Activated naive CD8-positive, alpha-beta T cell treated with anti-CD3 and anti-CD28 coated beads, Interleukin-2, amount 10 ng/mL, durations not matched to agents 7 days and 5 days (primary cell): ENCODE measurements at regions of chr17 and their contacts with region 1.

Region 1: DNA sequence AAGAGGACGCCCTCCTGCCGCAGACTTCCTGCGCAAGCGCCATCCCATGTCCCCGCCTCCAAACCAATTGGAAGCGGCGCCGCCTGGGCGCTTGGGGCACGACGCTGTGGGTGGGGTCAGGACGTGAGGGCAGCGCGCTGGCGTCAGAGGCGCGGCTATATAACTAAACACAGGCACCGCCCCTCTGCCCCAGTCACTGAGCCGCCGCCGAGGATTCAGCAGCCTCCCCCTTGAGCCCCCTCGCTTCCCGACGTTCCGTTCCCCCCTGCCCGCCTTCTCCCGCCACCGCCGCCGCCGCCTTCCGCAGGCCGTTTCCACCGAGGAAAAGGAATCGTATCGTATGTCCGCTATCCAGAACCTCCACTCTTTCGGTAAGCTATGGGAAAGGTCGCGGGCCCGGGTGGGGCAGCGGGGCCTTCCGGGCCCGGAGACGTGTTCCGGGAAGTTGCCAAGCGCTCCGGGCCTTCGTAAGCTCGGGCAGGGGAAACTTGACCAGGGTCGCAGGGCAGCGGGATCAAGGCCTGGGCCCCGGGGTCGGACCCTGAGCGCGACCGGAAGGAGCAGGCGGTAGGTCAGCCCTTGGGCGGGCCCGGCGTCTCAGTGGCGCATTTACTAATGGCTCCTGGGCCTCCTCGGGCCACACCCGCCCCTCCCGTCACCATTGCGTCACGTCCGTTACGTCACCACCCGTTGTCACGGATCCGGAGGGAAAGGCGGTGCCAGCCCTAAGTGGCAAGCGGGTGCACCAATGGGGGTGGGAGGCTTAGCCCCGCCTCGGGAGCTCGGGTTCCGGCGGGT is at the start of gene EIF1:
- DNase-seq: peak; percentile 100
- ATAC-seq: peak; percentile 67
- H3K4me3 Mint-ChIP-seq: peak within 1 kb of the TSS; percentile 90
- H3K27ac Mint-ChIP-seq: peak within 1 kb of the TSS; percentile 95
- H3K4me1 Mint-ChIP-seq: peaks cover 28% of the 10 kb centered on the region
- H3K27me3 Mint-ChIP-seq: no peaks in the 10 kb centered on the region
- total RNA-seq, gene EIF1: 682 to 723 TPM

Region 2: GRCh38 chr17:41648411-41649195 is 40.3 kb before region 1 on chr17:
- POLR2A ChIA-PET with region 1: interaction called, 21 read pairs
- DNase-seq: peak; percentile 93
- ATAC-seq: peak; percentile 81
- H3K4me3 Mint-ChIP-seq: peak overlapping the region; percentile 79
- H3K27ac Mint-ChIP-seq: peak overlapping the region; percentile 72
- H3K4me1 Mint-ChIP-seq: peaks cover 8% of the 10 kb centered on the region
- H3K27me3 Mint-ChIP-seq: peaks cover 2% of the 10 kb centered on the region

Region 3: GRCh38 chr17:41665566-41666236 is 23.2 kb before region 1 on chr17:
- POLR2A ChIA-PET with region 1: interaction called, 171 read pairs
- DNase-seq: peak; percentile 99
- ATAC-seq: peak; percentile 90
- H3K4me3 Mint-ChIP-seq: peak overlapping the region; percentile 88
- H3K27ac Mint-ChIP-seq: peak overlapping the region; percentile 96
- H3K4me1 Mint-ChIP-seq: peaks cover 28% of the 10 kb centered on the region
- H3K27me3 Mint-ChIP-seq: peaks cover 13% of the 10 kb centered on the region

Region 4: GRCh38 chr17:41672153-41672552 is 16.7 kb before region 1 on chr17:
- POLR2A ChIA-PET with region 1: interaction called, 331 read pairs
- DNase-seq: no peak
- ATAC-seq: no peak
- H3K4me3 Mint-ChIP-seq: no peak overlapping the region
- H3K27ac Mint-ChIP-seq: no peak overlapping the region
- H3K4me1 Mint-ChIP-seq: peaks cover 32% of the 10 kb centered on the region
- H3K27me3 Mint-ChIP-seq: no peaks in the 10 kb centered on the region

Region 5: DNA sequence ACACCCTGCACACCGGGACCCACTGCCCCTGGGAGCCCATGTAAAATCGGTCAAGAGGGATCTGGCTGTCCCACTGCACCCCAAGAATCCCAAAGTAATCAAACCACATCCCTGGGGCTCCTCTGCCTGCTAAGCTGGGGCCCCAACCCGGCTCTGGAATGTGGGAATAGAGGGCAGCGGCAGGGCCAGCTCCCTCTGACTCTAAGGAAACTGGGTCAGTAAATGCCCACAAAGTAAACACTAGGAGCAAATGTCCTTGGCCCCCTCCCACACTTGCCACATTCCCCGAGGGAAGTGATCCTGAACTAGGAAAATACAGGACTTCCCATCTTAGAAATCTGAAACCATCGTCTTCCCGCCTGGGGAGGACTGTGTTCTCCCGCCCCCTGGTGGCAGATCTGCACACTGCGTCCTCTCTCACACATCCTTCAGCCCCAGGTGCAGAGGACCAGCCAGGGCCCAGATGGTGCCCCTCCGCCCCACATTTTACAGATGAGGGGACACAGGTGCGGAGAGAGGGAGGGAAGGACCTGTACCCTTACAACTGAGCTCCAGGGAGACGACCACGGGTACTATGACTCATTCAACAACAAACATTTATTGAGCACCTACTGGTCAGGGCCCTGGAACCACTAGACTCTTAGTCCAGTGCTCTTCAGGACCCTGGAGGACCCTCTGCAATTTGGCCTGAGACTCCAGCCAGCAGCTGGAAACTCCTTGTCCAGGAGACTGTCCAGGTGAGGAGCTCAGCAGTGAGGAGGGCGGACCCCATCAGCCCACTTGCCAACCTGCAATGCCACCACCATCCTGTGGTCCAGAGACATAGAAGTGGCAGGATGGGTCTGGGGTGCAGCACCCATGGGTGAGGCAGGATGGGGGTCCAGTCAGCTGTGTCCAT is 112.7 kb after region 1 on chr17:
- POLR2A ChIA-PET with region 1: no interaction called
- DNase-seq: peak; percentile 80
- ATAC-seq: peak; percentile 79
- H3K4me3 Mint-ChIP-seq: no peak overlapping the region
- H3K27ac Mint-ChIP-seq: no peak overlapping the region
- H3K4me1 Mint-ChIP-seq: peaks cover 5% of the 10 kb centered on the region
- H3K27me3 Mint-ChIP-seq: no peaks in the 10 kb centered on the region

Region 6: GRCh38 chr17:41811549-41812380 is 122.9 kb after region 1 on chr17 and contains the start of gene P3H4:
- POLR2A ChIA-PET with region 1: interaction called, 16 read pairs
- DNase-seq: peak; percentile 89
- ATAC-seq: peak; percentile 93
- H3K4me3 Mint-ChIP-seq: peak within 1 kb of the TSS; percentile 87
- H3K27ac Mint-ChIP-seq: peak within 1 kb of the TSS; percentile 66
- H3K4me1 Mint-ChIP-seq: peaks cover 8% of the 10 kb centered on the region
- H3K27me3 Mint-ChIP-seq: peaks cover 13% of the 10 kb centered on the region
- total RNA-seq, gene P3H4: 3.2 to 3.7 TPM